AG04449 (cell line): ENCODE measurements at regions of chr10 and their contacts with region 1.

Region 1: DNA sequence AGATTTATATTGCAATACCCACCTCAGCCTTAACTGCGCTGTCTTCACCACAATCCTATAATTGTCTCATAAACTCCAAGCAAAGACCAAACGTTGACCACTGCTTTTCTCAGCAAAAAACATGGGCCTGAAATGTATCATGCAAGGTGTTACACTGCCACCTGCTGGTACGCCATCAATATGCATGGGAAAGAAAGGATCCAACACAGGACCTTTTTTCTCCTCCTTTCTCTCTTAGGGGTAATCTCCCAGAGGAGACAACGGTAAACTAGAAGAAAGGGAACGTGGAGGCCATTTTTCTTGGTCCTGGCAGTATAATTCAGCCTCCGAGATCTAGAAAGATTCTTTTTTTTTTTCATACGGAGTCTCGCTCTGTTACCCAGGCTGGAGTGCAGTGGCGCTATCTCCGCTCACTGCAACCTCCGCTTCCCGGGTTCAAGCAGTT is 79.1 kb upstream of the MPP7 start:
- DNase-seq: peak; percentile 65
- H3K4me3 ChIP-seq: no peak overlapping the region
- CTCF ChIP-seq: peak; percentile 78

Region 2: GRCh38 chr10:28263136-28263820 is 118.6 kb before region 1 on chr10:
- CTCF ChIA-PET with region 1: interaction called, 18 read pairs
- POLR2A ChIA-PET with region 1: no interaction called
- DNase-seq: no peak
- H3K4me3 ChIP-seq: no peak overlapping the region
- CTCF ChIP-seq: no peak

Region 3: GRCh38 chr10:28291881-28292297 is 90.0 kb before region 1 on chr10:
- CTCF ChIA-PET with region 1: interaction called, 29 read pairs
- POLR2A ChIA-PET with region 1: no interaction called
- DNase-seq: peak; percentile 65
- H3K4me3 ChIP-seq: no peak overlapping the region
- CTCF ChIP-seq: no peak

Region 4: DNA sequence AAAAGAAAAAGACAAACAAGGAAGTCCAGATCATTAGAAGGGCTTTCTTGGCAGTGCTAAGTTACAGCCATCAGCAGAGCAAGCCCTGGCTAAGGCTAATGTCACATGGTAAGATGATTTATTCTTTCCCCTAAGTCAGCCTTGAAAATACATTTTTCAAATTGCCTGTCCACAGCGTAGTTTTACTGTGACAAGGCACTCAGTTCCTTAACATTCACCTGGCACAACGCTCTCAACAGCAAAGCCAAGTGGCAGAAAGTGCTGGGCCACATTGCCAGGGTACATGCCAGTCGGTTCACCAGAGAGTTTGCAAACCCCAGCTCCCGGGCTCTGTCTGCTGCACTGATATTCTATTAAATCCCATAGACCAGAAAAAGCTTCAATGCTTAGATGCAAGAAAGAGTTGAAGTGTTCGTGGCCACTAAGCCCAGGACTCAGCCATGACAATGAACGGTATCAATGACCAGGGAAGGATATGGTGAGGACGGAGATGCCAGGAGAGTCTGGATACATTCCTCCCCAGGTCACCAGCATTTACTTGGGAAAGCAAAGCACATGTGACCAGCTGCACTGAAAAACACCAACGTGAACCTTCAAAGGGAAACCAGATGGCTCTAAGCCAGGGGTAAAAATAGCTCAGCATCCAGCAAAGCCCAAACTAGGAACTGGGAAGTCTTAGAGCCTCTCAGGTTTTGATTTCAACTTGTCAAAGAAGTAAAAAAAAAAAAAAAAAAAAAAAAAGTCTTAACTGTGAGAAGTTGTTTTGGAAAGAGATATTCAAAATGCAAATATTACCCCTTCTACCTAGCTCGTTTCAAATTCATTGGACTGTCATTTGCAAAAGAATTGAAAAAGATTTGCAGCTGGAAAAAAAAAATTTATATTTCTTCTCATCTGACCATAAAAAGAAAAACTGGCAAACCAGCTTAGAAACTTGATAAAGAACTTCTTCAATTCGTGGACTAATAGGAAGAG is 55.1 kb before region 1 on chr10:
- CTCF ChIA-PET with region 1: interaction called, 12 read pairs
- POLR2A ChIA-PET with region 1: no interaction called
- DNase-seq: no peak
- H3K4me3 ChIP-seq: no peak overlapping the region
- CTCF ChIP-seq: no peak

Region 5: DNA sequence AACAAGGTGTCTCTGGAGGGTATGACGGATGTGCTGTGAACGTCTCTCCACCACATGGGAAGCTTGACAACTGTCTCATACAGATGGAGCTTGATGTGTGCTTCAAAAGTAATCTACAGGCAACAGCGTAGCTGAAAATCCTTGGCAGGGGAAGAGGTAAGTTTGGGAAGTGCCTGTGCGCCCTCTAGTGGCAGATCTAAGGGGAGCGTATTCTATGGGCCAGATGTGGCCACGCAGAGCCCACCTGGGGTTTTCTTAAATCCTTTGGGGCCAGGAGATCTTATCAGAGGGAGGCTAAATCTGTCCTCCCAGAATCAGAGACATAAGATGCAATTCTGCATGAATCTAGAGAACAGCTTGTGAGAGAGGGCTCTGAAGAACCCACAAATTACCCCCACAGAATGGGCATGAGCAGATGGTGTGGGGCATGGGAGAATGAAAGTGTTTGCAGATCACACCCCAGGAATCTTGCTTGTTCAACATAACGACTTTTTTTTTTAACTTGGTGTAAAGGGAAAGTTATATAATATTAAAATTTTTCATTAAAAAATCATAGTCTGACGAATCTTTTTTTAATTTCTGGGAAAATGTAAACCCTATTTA is 12.1 kb after region 1 on chr10:
- CTCF ChIA-PET with region 1: interaction called, 112 read pairs
- POLR2A ChIA-PET with region 1: no interaction called
- DNase-seq: no peak
- H3K4me3 ChIP-seq: no peak overlapping the region
- CTCF ChIP-seq: peak; percentile 83